ENCODE measurements at regions of chr2 and their contacts with region 1.

Region 1: GRCh38 chr2:109125593-109126500 is 3.2 kb upstream of the SH3RF3 start:
- DNase-seq: no peak
- ATAC-seq: 0 out of 2 replicates have a peak, but pooled peaks have one; percentile 27
- H3K4me3 ChIP-seq: no peak overlapping the region
- H3K27ac ChIP-seq: peak overlapping the region; percentile 59
- H3K4me1 ChIP-seq: peaks cover 15% of the 10 kb centered on the region
- H3K27me3 ChIP-seq: no peaks in the 10 kb centered on the region; the same call in 1 of the 2 replicates
- CTCF ChIP-seq: no peak

Region 2: GRCh38 chr2:109392816-109393661 is 267.2 kb after region 1 on chr2:
- CTCF ChIA-PET with region 1: no interaction called
- POLR2A ChIA-PET with region 1: interaction called, 10 read pairs
- in situ Hi-C with region 1: no loop called
- intact Hi-C with region 1: no loop called
- DNase-seq: no peak
- ATAC-seq: no peak
- H3K4me3 ChIP-seq: no peak overlapping the region
- H3K27ac ChIP-seq: no peak overlapping the region
- H3K4me1 ChIP-seq: no peaks in the 10 kb centered on the region
- H3K27me3 ChIP-seq: no peaks in the 10 kb centered on the region; the same call in 1 of the 2 replicates
- CTCF ChIP-seq: no peak

Region 3: DNA sequence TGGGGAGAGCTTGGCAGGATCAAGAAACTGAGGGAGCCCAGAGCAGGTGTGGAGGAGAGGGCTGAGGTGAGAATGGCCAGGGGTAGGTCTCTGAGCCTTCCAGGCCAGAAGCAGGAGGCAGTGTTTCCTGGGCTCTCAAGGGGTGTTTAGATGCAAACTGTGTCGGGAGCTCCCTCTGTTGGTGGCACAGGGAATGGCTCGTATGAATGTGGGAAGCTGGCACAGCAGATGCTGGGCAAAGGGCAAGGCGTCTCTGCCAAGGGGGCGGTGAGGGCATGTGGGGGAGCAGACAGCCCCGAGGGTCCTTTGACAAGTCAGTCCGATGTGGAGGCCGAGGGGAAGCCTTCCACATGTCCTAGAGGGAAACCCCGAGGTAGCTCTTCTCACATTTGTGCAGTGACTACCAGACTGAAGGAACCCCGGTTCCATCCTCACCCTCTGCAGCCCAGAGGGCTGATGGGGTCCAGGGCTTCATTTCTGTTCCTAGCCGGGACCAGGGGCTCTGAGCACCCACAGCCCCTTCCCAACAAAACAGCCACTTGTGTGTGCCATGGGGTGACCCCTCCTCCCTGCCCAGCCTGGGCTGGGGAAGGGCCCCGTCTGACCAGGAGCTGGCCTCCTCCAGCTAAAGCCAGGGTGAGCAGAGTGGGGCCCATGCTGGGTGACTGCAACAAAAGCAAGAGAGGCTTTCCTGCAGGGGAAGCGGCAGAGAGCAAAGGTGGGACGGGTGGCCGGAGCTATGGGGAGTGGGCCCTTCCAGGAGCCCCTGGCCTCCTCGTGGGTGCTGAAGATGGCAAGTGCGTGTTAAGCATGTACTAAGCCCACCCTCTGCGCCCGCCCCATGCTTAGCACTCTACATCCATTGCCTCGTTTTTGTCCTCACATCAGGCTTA is 384.5 kb after region 1 on chr2:
- CTCF ChIA-PET with region 1: interaction called, 3 read pairs
- POLR2A ChIA-PET with region 1: no interaction called
- in situ Hi-C with region 1: no loop called
- intact Hi-C with region 1: loop called (anchors 2 kb)
- DNase-seq: peak; percentile 53
- ATAC-seq: peak; percentile 86
- H3K4me3 ChIP-seq: no peak overlapping the region
- H3K27ac ChIP-seq: no peak overlapping the region
- H3K4me1 ChIP-seq: peaks cover 6% of the 10 kb centered on the region
- H3K27me3 ChIP-seq: no peaks in the 10 kb centered on the region
- CTCF ChIP-seq: peak; percentile 97

Measured in Panc1 (cell line).